ENCODE measurements at regions of chr1 and their contacts with region 1.

Region 1: GRCh38 chr1:39408641-39409054 is 82.8 kb upstream of the BMP8A start:
- DNase-seq: peak; percentile 87
- H3K4me3 ChIP-seq: peak overlapping the region; percentile 72
- H3K27ac ChIP-seq: peak overlapping the region; percentile 78
- H3K27me3 ChIP-seq: no peaks in the 10 kb centered on the region
- CTCF ChIP-seq: no peak

Region 2: GRCh38 chr1:39378377-39378776 is 30.3 kb before region 1 on chr1:
- CTCF ChIA-PET with region 1: interaction called, 14 read pairs
- POLR2A ChIA-PET with region 1: no interaction called
- DNase-seq: no peak
- H3K4me3 ChIP-seq: no peak overlapping the region
- H3K27ac ChIP-seq: no peak overlapping the region
- H3K27me3 ChIP-seq: no peaks in the 10 kb centered on the region
- CTCF ChIP-seq: peak; percentile 21; the same call in 1 of the 2 replicates

Region 3: DNA sequence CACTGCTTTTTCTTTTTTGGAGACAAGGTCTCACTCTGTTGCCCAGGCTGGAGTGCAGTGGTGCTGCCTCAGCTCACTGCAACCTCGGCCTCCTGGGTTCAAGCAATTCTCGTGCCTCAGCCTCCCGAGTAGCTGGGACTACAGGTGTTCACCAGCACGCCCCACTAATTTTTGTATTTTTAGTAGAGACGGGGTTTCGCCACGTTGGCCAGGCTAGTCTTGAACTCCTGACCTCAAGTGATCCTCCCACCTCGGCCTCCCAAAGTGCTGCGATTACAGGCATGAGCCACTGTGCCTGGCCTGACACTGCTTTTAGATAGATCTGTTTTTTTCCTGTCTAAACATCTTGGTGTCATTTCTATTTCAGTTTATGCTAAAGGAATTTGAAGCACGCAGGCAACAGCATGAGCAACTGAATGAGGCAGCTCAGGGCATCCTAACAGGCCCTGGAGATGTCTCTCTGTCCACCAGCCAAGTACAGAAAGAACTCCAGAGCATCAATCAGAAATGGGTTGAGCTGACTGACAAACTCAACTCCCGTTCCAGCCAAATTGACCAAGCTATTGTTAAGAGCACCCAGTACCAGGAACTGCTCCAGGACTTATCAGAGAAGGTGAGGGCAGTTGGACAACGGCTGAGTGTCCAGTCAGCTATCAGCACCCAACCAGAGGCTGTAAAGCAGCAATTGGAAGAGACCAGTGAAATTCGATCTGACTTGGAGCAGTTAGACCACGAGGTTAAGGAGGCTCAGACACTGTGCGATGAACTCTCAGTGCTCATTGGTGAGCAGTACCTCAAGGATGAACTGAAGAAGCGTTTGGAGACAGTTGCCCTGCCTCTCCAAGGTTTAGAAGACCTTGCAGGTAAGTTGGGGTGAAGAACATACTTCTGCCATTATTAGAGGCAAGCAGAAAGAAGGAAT is 23.3 kb before region 1 on chr1:
- CTCF ChIA-PET with region 1: interaction called, 32 read pairs
- POLR2A ChIA-PET with region 1: interaction called, 12 read pairs
- DNase-seq: no peak
- H3K4me3 ChIP-seq: no peak overlapping the region
- H3K27ac ChIP-seq: no peak overlapping the region
- H3K27me3 ChIP-seq: no peaks in the 10 kb centered on the region
- CTCF ChIP-seq: no peak

Region 4: GRCh38 chr1:39391691-39392679 is 16.7 kb before region 1 on chr1:
- CTCF ChIA-PET with region 1: interaction called, 61 read pairs
- POLR2A ChIA-PET with region 1: interaction called, 7 read pairs
- DNase-seq: no peak
- H3K4me3 ChIP-seq: no peak overlapping the region
- H3K27ac ChIP-seq: peak overlapping the region; percentile 73
- H3K27me3 ChIP-seq: no peaks in the 10 kb centered on the region
- CTCF ChIP-seq: no peak

Region 5: GRCh38 chr1:39398278-39399021 is 10.2 kb before region 1 on chr1:
- CTCF ChIA-PET with region 1: interaction called, 61 read pairs
- POLR2A ChIA-PET with region 1: interaction called, 9 read pairs
- DNase-seq: peak; percentile 91
- H3K4me3 ChIP-seq: no peak overlapping the region
- H3K27ac ChIP-seq: peak overlapping the region; percentile 88
- H3K27me3 ChIP-seq: no peaks in the 10 kb centered on the region
- CTCF ChIP-seq: 0 out of 2 replicates have a peak, but pooled peaks have one; percentile 5

Region 6: GRCh38 chr1:39425151-39425550 is 16.5 kb after region 1 on chr1:
- CTCF ChIA-PET with region 1: interaction called, 14 read pairs
- POLR2A ChIA-PET with region 1: interaction called, 4 read pairs
- DNase-seq: no peak
- H3K4me3 ChIP-seq: no peak overlapping the region
- H3K27ac ChIP-seq: no peak overlapping the region
- H3K27me3 ChIP-seq: no peaks in the 10 kb centered on the region
- CTCF ChIP-seq: no peak

Measured in AG04450 (cell line).